ENCODE measurements at regions of chr6 and their contacts with region 1.

Region 1: GRCh38 chr6:158869826-158870648 is 50.9 kb upstream of the EZR start:
- DNase-seq: peak; percentile 99
- H3K4me3 ChIP-seq: peak overlapping the region; percentile 64
- H3K27ac ChIP-seq: peak overlapping the region; percentile 96
- H3K4me1 ChIP-seq: peaks cover 71% of the 10 kb centered on the region
- CTCF ChIP-seq: 0 out of 2 replicates have a peak, but pooled peaks have one; percentile 31

Region 2: GRCh38 chr6:158666628-158667359 is 203.2 kb before region 1 on chr6:
- CTCF ChIA-PET with region 1: no interaction called
- POLR2A ChIA-PET with region 1: no interaction called
- intact Hi-C with region 1: no loop called
- DNase-seq: no peak
- H3K4me3 ChIP-seq: no peak overlapping the region
- H3K27ac ChIP-seq: no peak overlapping the region
- H3K4me1 ChIP-seq: no peaks in the 10 kb centered on the region
- CTCF ChIP-seq: no peak

Region 3: GRCh38 chr6:158718461-158719046 is 151.5 kb before region 1 on chr6:
- CTCF ChIA-PET with region 1: no interaction called
- POLR2A ChIA-PET with region 1: interaction called, 6 read pairs
- intact Hi-C with region 1: loop called (anchors 5 kb)
- DNase-seq: peak; percentile 45
- H3K4me3 ChIP-seq: no peak overlapping the region
- H3K27ac ChIP-seq: no peak overlapping the region
- H3K4me1 ChIP-seq: peaks cover 41% of the 10 kb centered on the region
- CTCF ChIP-seq: peak; percentile 88

Region 4: GRCh38 chr6:158819213-158819909 is 50.7 kb before region 1 on chr6 and contains the start of gene EZR:
- CTCF ChIA-PET with region 1: no interaction called
- POLR2A ChIA-PET with region 1: interaction called, 76 read pairs
- intact Hi-C with region 1: loop called (anchors 1 kb)
- DNase-seq: peak; percentile 95
- H3K4me3 ChIP-seq: peak within 1 kb of the TSS; percentile 87
- H3K27ac ChIP-seq: peak within 1 kb of the TSS; percentile 100
- H3K4me1 ChIP-seq: peaks cover 37% of the 10 kb centered on the region
- CTCF ChIP-seq: peak; percentile 32
- total RNA-seq, gene EZR: 268 and 360 TPM in 2 replicates

Region 5: GRCh38 chr6:158910484-158911348 is 40.7 kb after region 1 on chr6:
- CTCF ChIA-PET with region 1: no interaction called
- POLR2A ChIA-PET with region 1: interaction called, 14 read pairs
- intact Hi-C with region 1: loop called (anchors 1 kb)
- DNase-seq: peak; percentile 90
- H3K4me3 ChIP-seq: peak overlapping the region; percentile 60
- H3K27ac ChIP-seq: peak overlapping the region; percentile 94
- H3K4me1 ChIP-seq: peaks cover 48% of the 10 kb centered on the region
- CTCF ChIP-seq: peak; percentile 52

Region 6: GRCh38 chr6:158972241-158973233 is 102.5 kb after region 1 on chr6:
- CTCF ChIA-PET with region 1: no interaction called
- POLR2A ChIA-PET with region 1: interaction called, 3 read pairs
- intact Hi-C with region 1: loop called (anchors 5 kb)
- DNase-seq: peak; percentile 77
- H3K4me3 ChIP-seq: no peak overlapping the region
- H3K27ac ChIP-seq: no peak overlapping the region
- H3K4me1 ChIP-seq: peaks cover 4% of the 10 kb centered on the region
- CTCF ChIP-seq: peak; percentile 96